AG04449 (cell line): ENCODE measurements at regions of chrX and their contacts with region 1.

Region 1: DNA sequence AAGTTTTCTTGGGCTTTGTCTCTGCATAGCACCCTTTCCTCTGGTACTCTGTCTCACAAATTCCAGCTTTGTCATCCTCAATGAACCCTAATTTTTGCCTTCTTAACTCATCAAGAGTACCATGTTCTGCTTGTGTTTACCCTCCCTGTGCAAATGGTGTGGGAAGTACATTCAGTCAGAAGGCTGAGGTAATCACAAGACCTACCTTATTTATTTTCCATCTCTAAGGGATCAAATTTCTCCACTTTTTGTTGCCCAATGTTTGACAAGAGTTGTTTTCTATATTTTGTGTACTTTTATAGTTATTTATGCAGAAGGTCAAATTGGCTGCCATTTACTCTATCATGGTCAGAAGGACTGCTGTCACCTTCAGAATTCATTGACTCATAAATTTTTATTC is 85.4 kb upstream of the RAP2C start:
- DNase-seq: no peak
- H3K4me3 ChIP-seq: no peak overlapping the region
- CTCF ChIP-seq: no peak

Region 2: DNA sequence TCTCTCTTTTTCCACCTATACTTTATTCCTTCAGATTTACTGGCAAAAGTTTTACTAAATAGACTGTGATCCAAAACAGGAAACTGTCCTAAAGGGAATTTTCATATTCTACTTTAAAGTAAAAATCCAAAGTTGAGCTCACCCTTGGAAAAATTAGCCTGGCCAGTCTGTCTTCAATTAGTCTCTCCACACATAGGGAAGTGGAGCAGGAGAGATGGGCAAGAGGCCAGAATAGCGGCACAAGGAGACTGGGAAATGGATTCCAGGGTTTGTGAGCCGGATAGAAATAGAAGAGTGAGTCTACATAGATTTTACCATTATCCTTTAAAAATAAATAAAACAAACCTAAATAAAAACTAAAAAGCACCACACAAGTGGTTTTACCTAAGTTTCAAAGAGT is 160.5 kb before region 1 on chrX:
- CTCF ChIA-PET with region 1: no interaction called
- POLR2A ChIA-PET with region 1: no interaction called
- DNase-seq: no peak
- H3K4me3 ChIP-seq: no peak overlapping the region
- CTCF ChIP-seq: no peak

Region 3: DNA sequence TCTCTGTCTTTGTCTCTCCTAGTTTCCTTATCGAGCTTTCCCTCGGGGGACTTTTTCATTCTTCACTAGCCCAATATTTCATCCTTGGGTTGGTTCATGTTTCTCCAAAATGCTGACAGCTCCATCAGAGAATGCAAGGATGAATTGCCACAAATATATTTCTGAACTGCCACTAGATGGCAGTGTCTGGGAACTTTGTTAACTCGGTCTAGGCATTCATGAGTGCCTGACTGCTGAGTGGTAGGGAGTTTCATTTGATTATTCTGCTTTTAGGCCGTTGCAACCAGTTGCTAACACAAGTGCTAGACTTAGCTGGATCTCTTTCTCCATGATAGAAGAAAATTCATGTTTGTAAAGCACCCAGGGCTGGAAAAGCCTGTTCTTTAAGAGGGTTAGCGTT is 11.8 kb before region 1 on chrX:
- CTCF ChIA-PET with region 1: interaction called, 12 read pairs
- POLR2A ChIA-PET with region 1: no interaction called
- DNase-seq: peak; percentile 12
- H3K4me3 ChIP-seq: no peak overlapping the region
- CTCF ChIP-seq: peak; percentile 33